SK-MEL-5 (cell line): ENCODE measurements at regions of chr15 and their contacts with region 1.

Region 1: DNA sequence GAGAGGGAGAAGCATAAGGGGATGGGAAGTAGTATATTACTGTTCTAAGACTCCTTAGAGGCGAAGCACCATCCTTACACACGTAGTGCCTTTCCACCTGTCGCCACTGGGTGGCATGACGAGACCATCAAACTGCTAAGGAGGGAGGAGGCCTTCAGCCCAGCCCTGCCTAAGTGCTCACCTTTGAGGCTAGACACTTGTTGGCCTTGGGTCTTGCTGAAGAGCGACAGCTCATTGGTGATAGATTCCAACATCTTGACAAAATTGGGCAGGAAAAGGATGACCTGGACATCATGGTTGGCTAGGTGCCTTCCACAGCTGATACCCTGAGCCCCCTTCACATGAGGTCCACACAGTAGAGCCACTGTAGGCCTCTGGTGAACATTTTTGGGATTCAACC is 19.6 kb downstream of the CLK3 start:
- DNase-seq: peak; percentile 81

Region 2: DNA sequence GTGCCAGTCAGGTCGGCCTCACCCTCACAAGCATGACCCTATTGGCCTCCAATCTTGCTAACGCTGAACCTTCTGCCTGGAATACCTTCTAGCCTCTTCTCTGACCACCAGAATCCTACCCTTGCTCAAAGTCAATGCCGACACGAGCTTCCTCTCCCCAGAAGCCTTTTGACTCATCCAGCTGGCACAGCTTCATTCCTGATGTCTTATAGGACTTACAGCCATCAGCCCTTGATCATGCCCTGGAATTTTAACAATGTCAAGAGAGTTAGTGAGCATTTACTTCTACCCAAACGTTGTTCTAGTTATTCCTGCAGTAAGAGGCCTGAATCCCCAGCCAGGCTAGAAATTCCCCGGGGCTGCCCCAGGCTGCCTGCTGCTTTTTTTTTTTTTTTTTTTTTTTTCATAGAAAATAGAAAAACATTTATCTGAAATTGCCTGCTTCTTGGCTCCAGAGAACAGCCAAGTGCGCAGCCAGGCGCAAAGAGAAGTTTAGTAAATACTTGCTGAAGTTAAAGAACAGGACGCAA is 117.3 kb after region 1 on chr15:
- in situ Hi-C with region 1: loop called (anchors 10 kb)
- DNase-seq: no peak

Region 3: DNA sequence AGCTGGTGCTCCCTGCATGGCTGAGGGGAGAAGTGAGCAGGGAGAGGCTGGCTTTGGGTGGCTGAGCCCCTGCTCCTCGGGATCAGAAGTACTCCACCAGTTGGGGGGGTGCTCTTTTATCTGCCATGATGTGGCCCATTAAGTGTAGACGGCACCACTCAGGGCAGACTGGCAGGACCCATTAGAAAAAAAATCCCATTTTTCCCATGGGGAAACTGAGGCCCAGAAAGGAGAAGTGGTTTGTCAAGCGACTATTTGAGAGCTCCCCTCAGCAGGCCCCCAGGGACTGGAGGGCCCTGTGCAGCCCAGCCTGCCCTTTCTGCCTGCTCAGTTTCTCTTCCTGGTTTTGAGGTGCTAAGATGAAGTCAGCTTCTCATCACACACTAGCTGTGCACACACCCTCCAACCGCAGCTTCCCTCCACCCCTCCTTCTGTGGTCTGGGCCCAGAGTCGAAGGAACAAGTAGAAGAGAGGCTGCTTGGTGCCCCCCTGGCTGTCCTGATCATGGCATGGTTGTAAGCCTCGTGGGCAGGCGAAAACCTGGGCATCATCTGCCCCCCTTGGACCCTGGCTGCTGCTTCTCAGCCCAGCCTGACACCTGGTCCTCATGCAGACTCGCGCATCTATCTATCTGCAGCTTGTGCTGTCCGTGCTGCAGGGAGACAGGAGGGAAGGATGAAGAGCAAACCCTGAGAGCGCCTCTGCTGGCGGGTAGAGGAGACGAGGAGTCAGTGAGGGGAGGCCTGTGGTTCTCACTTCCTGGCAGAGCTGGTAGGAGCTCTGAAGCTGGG is 152.2 kb after region 1 on chr15:
- in situ Hi-C with region 1: no loop called
- DNase-seq: peak; percentile 84